Activated B cell treated with CpG ODN at 0.5 μM for 24 hours (primary cell): ENCODE measurements at regions of chr13 and their contacts with region 1.

Region 1: DNA sequence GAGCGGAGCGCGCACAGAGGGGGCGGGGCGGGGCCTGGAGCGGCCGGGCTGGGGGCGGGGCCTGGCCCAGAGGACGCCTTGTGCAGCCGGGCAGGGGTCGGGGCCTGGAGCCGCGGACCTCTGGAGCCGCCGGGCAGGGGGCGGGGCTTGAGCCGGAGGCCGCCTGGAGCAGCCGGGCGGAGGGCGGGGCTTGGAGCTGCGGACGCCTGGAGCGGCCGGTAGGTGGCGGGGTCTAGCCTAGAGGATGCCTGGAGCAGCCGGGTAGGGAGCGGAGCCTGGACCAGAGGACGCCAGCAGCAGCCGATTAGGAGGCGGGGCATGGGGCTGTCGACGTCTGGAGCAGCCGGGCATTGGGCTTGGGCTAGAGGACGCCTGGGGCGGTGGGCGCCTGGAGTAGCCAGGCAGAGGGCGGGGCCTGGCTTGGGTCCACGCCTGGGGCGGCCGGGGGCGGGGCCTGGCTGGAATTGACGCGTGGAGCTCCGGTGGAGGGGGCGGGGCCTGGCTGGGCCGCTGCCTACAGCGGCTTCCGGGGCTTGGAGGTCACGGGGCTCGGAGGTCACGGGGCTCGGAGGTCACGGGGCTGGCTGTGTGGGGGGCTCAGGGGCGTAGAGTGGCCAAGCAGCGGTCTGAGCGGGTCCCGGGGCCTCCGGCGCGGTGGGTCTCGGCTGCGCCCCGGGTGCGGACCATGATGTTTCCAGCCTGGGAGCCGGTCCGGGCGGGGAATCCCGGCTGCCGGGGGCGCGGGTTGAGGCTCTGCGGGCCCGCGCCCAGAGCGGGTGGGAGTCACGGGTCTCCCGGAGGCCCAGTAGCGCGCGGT is at the start of gene ANKRD10:
- DNase-seq: peak; percentile 98
- ATAC-seq: peak; percentile 80
- H3K4me3 Mint-ChIP-seq: peak within 1 kb of the TSS; percentile 89
- H3K27ac Mint-ChIP-seq: peak within 1 kb of the TSS; percentile 91
- H3K4me1 Mint-ChIP-seq: peaks cover 58% of the 10 kb centered on the region
- H3K27me3 Mint-ChIP-seq: no peaks in the 10 kb centered on the region
- CTCF ChIP-seq: no peak
- total RNA-seq, gene ANKRD10: 212 and 256 TPM in 2 replicates

Region 2: GRCh38 chr13:110471833-110472162 is 443.5 kb before region 1 on chr13:
- CTCF ChIA-PET with region 1: no interaction called
- POLR2A ChIA-PET with region 1: no interaction called
- intact Hi-C with region 1: loop called (anchors 1 kb)
- DNase-seq: peak; percentile 59
- ATAC-seq: peak; percentile 93
- H3K4me3 Mint-ChIP-seq: peak overlapping the region; percentile 73
- H3K27ac Mint-ChIP-seq: peak overlapping the region; percentile 83
- H3K4me1 Mint-ChIP-seq: peaks cover 55% of the 10 kb centered on the region
- H3K27me3 Mint-ChIP-seq: no peaks in the 10 kb centered on the region
- CTCF ChIP-seq: no peak

Region 3: DNA sequence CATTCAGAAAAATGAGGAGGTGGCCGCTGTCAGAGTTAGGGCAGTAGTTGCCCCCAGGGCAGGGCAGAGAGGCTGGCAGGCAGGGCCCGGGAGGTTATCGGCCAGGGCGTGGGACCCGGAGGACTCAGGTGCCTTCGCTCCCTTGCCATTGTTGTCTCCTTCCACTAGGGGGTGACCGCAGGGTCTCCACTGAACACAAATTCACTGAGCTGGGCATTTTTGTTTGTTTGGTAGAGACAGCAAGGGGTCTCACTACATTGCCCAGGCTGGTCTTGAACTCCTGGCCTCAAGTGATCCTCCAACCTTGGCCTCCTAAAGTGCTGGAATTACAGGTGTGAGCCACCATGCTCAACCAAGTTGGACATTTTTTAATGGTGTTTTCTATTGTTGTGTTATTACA is 234.4 kb before region 1 on chr13:
- CTCF ChIA-PET with region 1: no interaction called
- POLR2A ChIA-PET with region 1: interaction called, 10 read pairs
- intact Hi-C with region 1: loop called (anchors 1 kb)
- DNase-seq: no peak
- ATAC-seq: no peak
- H3K4me3 Mint-ChIP-seq: no peak overlapping the region
- H3K27ac Mint-ChIP-seq: peak overlapping the region; percentile 35
- H3K4me1 Mint-ChIP-seq: peaks cover 37% of the 10 kb centered on the region
- H3K27me3 Mint-ChIP-seq: no peaks in the 10 kb centered on the region
- CTCF ChIP-seq: no peak

Region 4: GRCh38 chr13:110937511-110938285 is 22.4 kb after region 1 on chr13:
- CTCF ChIA-PET with region 1: interaction called, 5 read pairs
- POLR2A ChIA-PET with region 1: interaction called, 11 read pairs
- intact Hi-C with region 1: loop called (anchors 1 kb)
- DNase-seq: no peak
- ATAC-seq: peak; percentile 48
- H3K4me3 Mint-ChIP-seq: peak overlapping the region; percentile 21
- H3K27ac Mint-ChIP-seq: peak overlapping the region; percentile 68
- H3K4me1 Mint-ChIP-seq: peaks cover 36% of the 10 kb centered on the region
- H3K27me3 Mint-ChIP-seq: peaks cover 2% of the 10 kb centered on the region
- CTCF ChIP-seq: no peak

Region 5: GRCh38 chr13:111046590-111047141 is 131.4 kb after region 1 on chr13:
- CTCF ChIA-PET with region 1: interaction called, 3 read pairs
- POLR2A ChIA-PET with region 1: interaction called, 4 read pairs
- intact Hi-C with region 1: loop called (anchors 1 kb)
- DNase-seq: no peak
- ATAC-seq: peak; percentile 60
- H3K4me3 Mint-ChIP-seq: peak overlapping the region; percentile 32
- H3K27ac Mint-ChIP-seq: peak overlapping the region; percentile 50
- H3K4me1 Mint-ChIP-seq: peaks cover 10% of the 10 kb centered on the region
- H3K27me3 Mint-ChIP-seq: peaks cover 9% of the 10 kb centered on the region
- CTCF ChIP-seq: no peak

Region 6: DNA sequence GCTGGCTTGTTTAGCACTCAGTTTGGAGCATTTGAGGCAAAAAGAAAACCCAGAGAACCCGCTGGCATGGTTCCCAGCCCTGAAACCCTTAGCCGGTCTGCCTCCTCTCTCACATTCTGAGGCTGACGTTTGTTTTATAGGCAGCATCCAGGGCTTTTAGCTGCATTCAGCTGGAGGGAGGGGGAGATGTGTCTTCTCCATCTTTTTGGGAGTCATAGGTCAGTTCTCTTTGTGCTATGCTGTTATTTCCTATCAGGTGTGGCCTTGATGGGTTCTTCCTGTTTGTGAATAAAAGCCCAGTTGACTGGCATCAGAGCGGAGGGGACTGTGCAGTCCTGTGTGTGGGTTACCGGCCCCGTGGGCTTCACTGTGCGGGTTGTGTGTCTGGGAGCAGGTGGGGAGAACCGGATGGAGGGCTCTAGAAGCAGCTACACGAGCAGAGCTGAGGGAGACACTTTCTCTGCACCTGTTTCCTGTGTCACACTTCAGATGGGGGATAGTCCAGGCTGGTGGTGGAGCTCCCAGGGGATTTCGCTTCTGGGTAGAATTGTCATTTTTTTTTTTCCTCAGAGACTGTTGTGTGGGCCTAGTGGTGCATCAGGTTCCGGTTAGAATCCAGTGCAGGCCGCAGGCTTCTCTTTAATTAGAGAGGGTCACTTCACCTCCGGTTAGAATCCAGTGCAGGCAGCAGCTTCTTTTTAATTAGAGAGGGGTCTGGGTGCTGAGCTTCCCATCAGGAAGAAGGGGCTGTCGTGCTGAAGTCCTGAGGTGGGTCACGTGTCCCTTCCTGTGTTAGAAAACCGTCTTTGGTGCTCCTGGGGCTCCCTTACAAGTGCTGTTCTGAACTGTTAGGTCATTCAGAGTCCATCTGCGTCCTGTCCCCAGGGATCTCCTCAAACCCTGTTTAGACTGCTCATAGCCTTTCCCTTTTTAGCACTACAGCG is 269.5 kb after region 1 on chr13:
- CTCF ChIA-PET with region 1: no interaction called
- POLR2A ChIA-PET with region 1: interaction called, 9 read pairs
- intact Hi-C with region 1: loop called (anchors 1 kb)
- DNase-seq: peak; percentile 60
- ATAC-seq: peak; percentile 89
- H3K4me3 Mint-ChIP-seq: peak overlapping the region; percentile 80
- H3K27ac Mint-ChIP-seq: peak overlapping the region; percentile 94
- H3K4me1 Mint-ChIP-seq: peaks cover 99% of the 10 kb centered on the region
- H3K27me3 Mint-ChIP-seq: no peaks in the 10 kb centered on the region
- CTCF ChIP-seq: no peak

Region 7: DNA sequence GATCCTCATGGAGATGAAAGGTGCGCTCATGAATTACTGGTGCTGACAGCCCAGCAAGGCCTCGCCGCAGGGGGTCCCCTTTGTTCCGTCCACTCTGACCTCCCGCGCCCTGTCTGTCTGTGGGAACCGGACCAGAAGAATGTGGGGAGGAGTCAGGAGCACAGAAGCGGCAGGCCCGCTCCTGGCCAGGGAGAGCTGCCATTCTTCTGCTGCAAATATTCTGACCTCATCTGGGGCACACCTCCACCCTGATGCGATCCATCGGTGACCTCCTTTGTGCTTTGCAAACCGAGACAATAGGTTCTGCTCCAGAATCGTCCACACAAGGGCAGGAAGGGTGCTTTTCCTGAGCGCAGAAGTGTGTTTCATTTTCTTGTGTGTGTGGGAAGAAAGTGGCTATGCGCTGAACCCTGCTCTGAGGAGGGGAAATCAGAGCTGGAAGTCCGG is 1289.6 kb after region 1 on chr13:
- CTCF ChIA-PET with region 1: no interaction called
- POLR2A ChIA-PET with region 1: no interaction called
- intact Hi-C with region 1: no loop called
- DNase-seq: no peak
- ATAC-seq: no peak
- H3K4me3 Mint-ChIP-seq: no peak overlapping the region
- H3K27ac Mint-ChIP-seq: no peak overlapping the region
- H3K4me1 Mint-ChIP-seq: no peaks in the 10 kb centered on the region
- H3K27me3 Mint-ChIP-seq: peaks cover 43% of the 10 kb centered on the region
- CTCF ChIP-seq: no peak